SK-N-SH (cell line): ENCODE measurements at regions of chr17 and their contacts with region 1.

Region 1: DNA sequence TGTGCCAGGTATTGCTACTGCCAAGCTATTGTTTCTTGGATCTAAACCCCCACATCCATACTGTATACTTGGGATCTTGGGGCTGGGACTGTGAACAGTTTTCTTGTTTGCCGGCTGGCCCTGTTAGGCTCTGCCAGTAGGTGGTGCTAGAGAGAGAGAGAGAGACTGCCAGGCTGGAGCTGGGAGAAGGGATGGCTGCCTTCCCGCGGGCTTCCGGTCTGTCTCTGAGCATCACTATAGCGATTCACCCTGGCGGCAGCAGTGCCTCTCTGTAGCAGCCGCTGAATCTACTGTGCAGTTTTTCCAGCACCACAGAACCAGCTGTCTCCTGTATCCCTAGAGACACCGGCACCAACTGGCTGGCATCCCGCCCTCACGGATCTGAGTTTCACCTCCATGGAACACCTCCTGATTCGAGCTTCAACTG is 201.2 kb downstream of the UTP18 start:
- DNase-seq: peak; percentile 48
- H3K4me3 ChIP-seq: peak overlapping the region in 1 of 2 experiments; percentile 36; a peak in 1 of 4 replicates
- H3K27ac ChIP-seq: no peak overlapping the region
- H3K4me1 ChIP-seq: no peaks in the 10 kb centered on the region
- H3K27me3 ChIP-seq: no peaks in the 10 kb centered on the region
- CTCF ChIP-seq: peak; percentile 60
- EP300 ChIP-seq: no peak
- RAD21 ChIP-seq: peak; percentile 62

Region 2: DNA sequence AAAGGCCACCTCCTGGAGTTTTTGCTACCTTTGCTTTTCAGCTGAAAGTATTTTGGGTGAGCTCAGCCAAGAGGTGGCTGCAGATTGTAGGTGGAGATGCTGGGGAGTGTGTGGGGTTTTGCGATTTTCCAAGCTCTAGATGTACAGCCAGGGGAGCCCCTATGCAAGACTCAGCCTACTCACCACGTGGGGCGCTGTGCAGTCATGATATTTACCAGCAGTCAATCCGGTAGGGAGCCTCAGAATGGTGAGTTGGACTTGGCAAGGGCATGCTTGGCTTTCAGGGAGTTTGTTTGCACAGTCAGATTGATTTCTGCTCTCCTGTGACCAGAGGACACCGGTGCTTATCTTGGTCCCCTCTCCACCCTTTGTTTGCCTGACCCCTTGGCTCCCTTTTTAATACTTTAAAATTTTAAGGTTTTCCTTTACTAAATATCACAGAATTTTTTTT is 25.9 kb before region 1 on chr17:
- CTCF ChIA-PET with region 1: interaction called, 33 read pairs
- POLR2A ChIA-PET with region 1: no interaction called
- DNase-seq: peak; percentile 66
- H3K4me3 ChIP-seq: no peak overlapping the region
- H3K27ac ChIP-seq: no peak overlapping the region
- H3K4me1 ChIP-seq: peaks cover 0 to 4% of the 10 kb centered on the region in 2 experiments; a peak in 1 of 4 replicates
- H3K27me3 ChIP-seq: no peaks in the 10 kb centered on the region
- CTCF ChIP-seq: peak; percentile 42
- EP300 ChIP-seq: no peak
- RAD21 ChIP-seq: peak; percentile 63

Region 3: DNA sequence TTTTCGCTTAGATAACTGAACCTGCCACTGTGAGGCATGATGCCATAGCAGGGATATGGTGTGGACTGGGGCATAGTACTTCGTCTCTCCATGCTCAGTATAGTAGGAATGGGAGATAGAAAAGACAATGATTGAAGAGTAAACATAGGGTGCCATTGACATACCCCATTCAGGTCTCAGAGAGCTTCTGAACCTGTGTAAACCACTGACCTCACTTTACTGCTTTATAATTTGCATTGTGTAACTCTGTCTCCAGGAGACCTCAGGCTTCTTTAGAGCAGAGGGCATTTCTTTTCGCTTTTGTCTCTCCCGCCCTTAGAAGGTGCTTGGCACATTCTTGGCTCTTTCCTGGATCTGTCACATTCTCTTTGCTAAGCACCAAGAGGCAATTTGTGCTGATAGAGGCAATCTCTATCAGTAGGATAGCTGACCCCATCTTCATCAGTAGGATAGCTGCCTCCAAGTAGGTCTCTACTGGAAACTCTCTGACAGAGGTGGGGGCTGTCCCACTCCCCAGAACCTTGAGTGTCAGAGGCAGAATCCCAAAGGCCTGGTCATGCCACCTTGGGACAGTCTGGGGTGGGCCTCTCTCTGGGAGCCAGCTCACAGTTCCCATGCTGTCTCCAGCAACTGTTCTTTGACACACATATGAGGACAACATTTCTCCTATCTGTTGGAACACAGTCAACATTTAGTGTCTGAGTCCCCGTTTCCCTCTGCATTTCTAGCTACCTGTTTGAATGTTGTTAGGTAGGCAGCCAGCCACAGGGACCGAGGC is 19.3 kb before region 1 on chr17:
- CTCF ChIA-PET with region 1: interaction called, 13 read pairs
- POLR2A ChIA-PET with region 1: no interaction called
- DNase-seq: no peak
- H3K4me3 ChIP-seq: no peak overlapping the region
- H3K27ac ChIP-seq: no peak overlapping the region
- H3K4me1 ChIP-seq: no peaks in the 10 kb centered on the region
- H3K27me3 ChIP-seq: no peaks in the 10 kb centered on the region
- CTCF ChIP-seq: no peak
- EP300 ChIP-seq: no peak
- RAD21 ChIP-seq: no peak

Region 4: GRCh38 chr17:51472670-51473205 is 11.1 kb after region 1 on chr17:
- CTCF ChIA-PET with region 1: interaction called, 18 read pairs
- POLR2A ChIA-PET with region 1: interaction called, 3 read pairs
- DNase-seq: no peak
- H3K4me3 ChIP-seq: no peak overlapping the region
- H3K27ac ChIP-seq: no peak overlapping the region
- H3K4me1 ChIP-seq: peaks cover 0 to 17% of the 10 kb centered on the region in 2 experiments; a peak in 2 of 4 replicates
- H3K27me3 ChIP-seq: no peaks in the 10 kb centered on the region
- CTCF ChIP-seq: no peak
- EP300 ChIP-seq: no peak
- RAD21 ChIP-seq: no peak

Region 5: DNA sequence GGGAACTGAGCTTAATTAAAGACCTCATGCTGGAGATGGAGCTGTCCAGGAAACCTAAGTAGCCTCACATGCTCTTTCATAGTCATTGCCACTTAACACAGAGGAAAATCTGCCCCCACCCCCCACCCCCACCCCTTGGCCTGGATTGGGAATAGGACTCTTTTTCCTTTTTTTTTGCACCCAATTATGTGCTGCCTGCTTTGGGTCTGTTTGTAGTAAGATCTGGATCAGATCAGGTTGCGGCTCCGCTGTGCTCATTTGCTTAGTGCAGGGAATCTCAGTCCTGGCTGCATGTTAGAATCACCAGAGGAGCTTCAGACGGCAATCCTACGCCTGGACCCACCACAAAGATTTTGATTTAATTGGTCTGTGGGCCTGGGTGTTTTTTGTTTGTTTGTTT is 17.7 kb after region 1 on chr17:
- CTCF ChIA-PET with region 1: interaction called, 14 read pairs
- POLR2A ChIA-PET with region 1: interaction called, 3 read pairs
- DNase-seq: no peak
- H3K4me3 ChIP-seq: no peak overlapping the region
- H3K27ac ChIP-seq: no peak overlapping the region
- H3K4me1 ChIP-seq: peaks cover 0 to 12% of the 10 kb centered on the region in 2 experiments; a peak in 2 of 4 replicates
- H3K27me3 ChIP-seq: no peaks in the 10 kb centered on the region
- CTCF ChIP-seq: no peak
- EP300 ChIP-seq: no peak
- RAD21 ChIP-seq: no peak

Region 6: GRCh38 chr17:51647826-51648225 is 186.2 kb after region 1 on chr17:
- CTCF ChIA-PET with region 1: no interaction called
- POLR2A ChIA-PET with region 1: no interaction called
- DNase-seq: no peak
- H3K4me3 ChIP-seq: no peak overlapping the region
- H3K27ac ChIP-seq: no peak overlapping the region
- H3K4me1 ChIP-seq: peaks cover 0 to 2% of the 10 kb centered on the region in 2 experiments; a peak in 1 of 4 replicates
- H3K27me3 ChIP-seq: no peaks in the 10 kb centered on the region
- CTCF ChIP-seq: no peak
- EP300 ChIP-seq: no peak
- RAD21 ChIP-seq: no peak